ENCODE measurements at regions of chr20 and their contacts with region 1.

Region 1: GRCh38 chr20:49356676-49357075 is 78.8 kb upstream of the ZNFX1 start:
- DNase-seq: no peak
- ATAC-seq: peak in 1 of 2 experiments; percentile 17; a peak in 1 of 6 replicates
- H3K4me3 ChIP-seq: no peak overlapping the region
- H3K27ac ChIP-seq: no peak overlapping the region; a peak in 1 of 6 replicates
- H3K4me1 ChIP-seq: peaks cover 21% of the 10 kb centered on the region; the same call in 2 of the 3 replicates
- CTCF ChIP-seq: no peak
- EP300 ChIP-seq: no peak
- POLR2A ChIP-seq: no peak
- RAD21 ChIP-seq: no peak

Region 2: GRCh38 chr20:48933017-48933766 is 423.5 kb before region 1 on chr20:
- CTCF ChIA-PET with region 1: no interaction called
- POLR2A ChIA-PET with region 1: no interaction called
- DNase-seq: no peak
- ATAC-seq: peak; percentile 39 to 45; a peak in 4 of 6 replicates
- H3K4me3 ChIP-seq: no peak overlapping the region
- H3K27ac ChIP-seq: no peak overlapping the region
- H3K4me1 ChIP-seq: no peaks in the 10 kb centered on the region
- CTCF ChIP-seq: no peak
- EP300 ChIP-seq: no peak
- POLR2A ChIP-seq: no peak
- RAD21 ChIP-seq: no peak

Region 3: GRCh38 chr20:49344975-49345374 is 11.7 kb before region 1 on chr20:
- CTCF ChIA-PET with region 1: interaction called, 12 read pairs
- POLR2A ChIA-PET with region 1: no interaction called
- DNase-seq: peak; percentile 83 to 89
- ATAC-seq: peak; percentile 83 to 91
- H3K4me3 ChIP-seq: peak overlapping the region; percentile 33
- H3K27ac ChIP-seq: peak overlapping the region; percentile 85
- H3K4me1 ChIP-seq: peaks cover 50% of the 10 kb centered on the region
- CTCF ChIP-seq: no peak
- EP300 ChIP-seq: no peak
- POLR2A ChIP-seq: no peak
- RAD21 ChIP-seq: no peak

Measured in A549 (cell line).